WTC11 (cell line): ENCODE measurements at regions of chr10 and their contacts with region 1.

Region 1: DNA sequence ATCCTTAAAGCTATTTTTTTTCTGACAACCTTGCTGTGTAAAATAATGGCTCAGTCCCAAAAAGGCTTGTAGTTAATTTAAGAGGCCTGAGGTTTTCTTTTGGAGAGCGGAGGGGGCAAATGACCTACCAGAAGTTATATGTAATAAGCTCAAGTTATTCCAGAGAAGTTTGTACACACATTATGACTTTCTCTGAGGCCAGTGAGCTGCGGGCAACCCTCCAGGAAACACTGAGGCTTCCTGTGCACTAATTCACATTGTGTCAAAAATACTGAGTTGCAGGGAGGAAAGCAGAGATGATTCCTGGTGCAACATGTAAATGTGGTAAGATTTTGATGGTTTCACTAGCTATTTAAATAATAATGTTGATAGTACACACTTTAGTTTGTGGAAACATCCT is 188.6 kb downstream of the DIP2C start:
- DNase-seq: no peak
- ATAC-seq: no peak
- H3K4me3 Mint-ChIP-seq: no peak overlapping the region
- H3K27ac Mint-ChIP-seq: no peak overlapping the region
- H3K4me1 Mint-ChIP-seq: peaks cover 11% of the 10 kb centered on the region
- H3K27me3 Mint-ChIP-seq: peaks cover 54% of the 10 kb centered on the region
- CTCF ChIP-seq: no peak

Region 2: GRCh38 chr10:484441-484924 is 16.4 kb before region 1 on chr10:
- CTCF ChIA-PET with region 1: no interaction called
- POLR2A ChIA-PET with region 1: no interaction called
- DNase-seq: peak; percentile 58
- ATAC-seq: peak; percentile 70
- H3K4me3 Mint-ChIP-seq: peak overlapping the region; percentile 54
- H3K27ac Mint-ChIP-seq: no peak overlapping the region
- H3K4me1 Mint-ChIP-seq: peaks cover 35% of the 10 kb centered on the region
- H3K27me3 Mint-ChIP-seq: peaks cover 17% of the 10 kb centered on the region
- CTCF ChIP-seq: no peak

Region 3: DNA sequence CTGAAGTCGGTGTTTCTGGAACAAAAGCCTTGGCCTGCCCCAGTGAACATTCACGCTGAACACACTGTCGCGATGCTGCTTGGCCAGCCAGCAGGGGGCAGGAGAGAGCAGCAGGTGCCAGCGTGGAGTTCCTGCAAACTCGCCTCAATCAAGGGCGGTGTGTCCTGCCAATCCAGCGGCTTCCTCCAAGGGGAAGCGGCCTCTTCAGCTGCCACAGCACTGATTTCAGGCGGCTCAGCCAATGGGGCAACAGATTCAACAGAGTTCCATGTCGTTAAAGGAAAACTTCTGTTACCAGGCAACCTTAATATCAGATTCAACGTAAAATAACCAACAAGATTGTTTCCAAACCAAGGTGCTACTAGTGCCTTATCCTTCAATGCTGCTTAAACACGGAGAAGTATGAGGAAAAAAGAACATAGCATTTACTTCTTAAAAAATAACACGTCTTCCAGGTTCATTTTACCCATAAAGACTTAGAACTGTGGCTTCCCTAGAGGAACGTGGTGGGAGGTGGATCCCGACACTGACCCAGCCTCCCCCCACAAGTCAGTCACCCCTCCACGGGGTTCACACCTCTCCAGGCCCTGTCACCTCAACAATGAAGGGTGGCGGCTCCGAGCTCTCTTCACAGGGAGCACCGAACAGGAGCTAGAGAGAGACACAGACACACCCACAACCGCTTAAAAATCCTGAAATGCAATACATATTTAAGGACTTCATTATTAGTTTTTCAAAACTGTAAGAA is 10.4 kb after region 1 on chr10:
- CTCF ChIA-PET with region 1: interaction called, 12 read pairs
- POLR2A ChIA-PET with region 1: no interaction called
- DNase-seq: peak; percentile 95
- ATAC-seq: peak; percentile 95
- H3K4me3 Mint-ChIP-seq: no peak overlapping the region
- H3K27ac Mint-ChIP-seq: no peak overlapping the region
- H3K4me1 Mint-ChIP-seq: peaks cover 9% of the 10 kb centered on the region
- H3K27me3 Mint-ChIP-seq: peaks cover 48% of the 10 kb centered on the region
- CTCF ChIP-seq: peak; percentile 87